ENCODE measurements at regions of chr9 and their contacts with region 1.

Region 1: GRCh38 chr9:135968083-135968476 is 6.9 kb upstream of the UBAC1 start:
- DNase-seq: no peak
- H3K4me3 ChIP-seq: no peak overlapping the region
- H3K27ac ChIP-seq: no peak overlapping the region
- H3K4me1 ChIP-seq: peaks cover 0 to 8% (median 4%) of the 10 kb centered on the region in 4 experiments; a peak in 6 of 7 replicates
- H3K27me3 ChIP-seq: no peaks in the 10 kb centered on the region
- CTCF ChIP-seq: no peak
- EP300 ChIP-seq: no peak
- POLR2A ChIP-seq: no peak
- RAD21 ChIP-seq: no peak

Region 2: GRCh38 chr9:135835131-135835530 is 132.9 kb before region 1 on chr9:
- CTCF ChIA-PET with region 1: no interaction called
- POLR2A ChIA-PET with region 1: no interaction called
- DNase-seq: no peak
- H3K4me3 ChIP-seq: no peak overlapping the region
- H3K27ac ChIP-seq: no peak overlapping the region
- H3K4me1 ChIP-seq: peaks cover 0 to 9% (median 4%) of the 10 kb centered on the region in 4 experiments; a peak in 3 of 7 replicates
- H3K27me3 ChIP-seq: no peaks in the 10 kb centered on the region; a peak in 1 of 7 replicates
- CTCF ChIP-seq: peak in 1 of 3 experiments; percentile 36; a peak in 1 of 4 replicates
- EP300 ChIP-seq: no peak
- POLR2A ChIP-seq: no peak
- RAD21 ChIP-seq: no peak; a peak in 1 of 4 replicates

Region 3: GRCh38 chr9:135983208-135984071 is 15.4 kb after region 1 on chr9:
- CTCF ChIA-PET with region 1: interaction called, 20 read pairs
- POLR2A ChIA-PET with region 1: no interaction called
- DNase-seq: no peak
- H3K4me3 ChIP-seq: no peak overlapping the region
- H3K27ac ChIP-seq: no peak overlapping the region
- H3K4me1 ChIP-seq: peaks cover 0 to 3% (median 0%) of the 10 kb centered on the region in 4 experiments; a peak in 1 of 7 replicates
- H3K27me3 ChIP-seq: no peaks in the 10 kb centered on the region
- CTCF ChIP-seq: no peak
- EP300 ChIP-seq: no peak
- POLR2A ChIP-seq: no peak
- RAD21 ChIP-seq: no peak

Region 4: GRCh38 chr9:135992486-135993408 is 24.7 kb after region 1 on chr9:
- CTCF ChIA-PET with region 1: interaction called, 20 read pairs
- POLR2A ChIA-PET with region 1: interaction called, 3 read pairs
- DNase-seq: peak in 1 of 2 experiments; percentile 81
- H3K4me3 ChIP-seq: peak overlapping the region in 2 of 4 experiments; percentile 32 to 52; a peak in 4 of 8 replicates
- H3K27ac ChIP-seq: no peak overlapping the region
- H3K4me1 ChIP-seq: peaks cover 9 to 34% (median 27%) of the 10 kb centered on the region in 4 experiments
- H3K27me3 ChIP-seq: no peaks in the 10 kb centered on the region
- CTCF ChIP-seq: no peak
- EP300 ChIP-seq: no peak
- POLR2A ChIP-seq: no peak
- RAD21 ChIP-seq: no peak

Region 5: DNA sequence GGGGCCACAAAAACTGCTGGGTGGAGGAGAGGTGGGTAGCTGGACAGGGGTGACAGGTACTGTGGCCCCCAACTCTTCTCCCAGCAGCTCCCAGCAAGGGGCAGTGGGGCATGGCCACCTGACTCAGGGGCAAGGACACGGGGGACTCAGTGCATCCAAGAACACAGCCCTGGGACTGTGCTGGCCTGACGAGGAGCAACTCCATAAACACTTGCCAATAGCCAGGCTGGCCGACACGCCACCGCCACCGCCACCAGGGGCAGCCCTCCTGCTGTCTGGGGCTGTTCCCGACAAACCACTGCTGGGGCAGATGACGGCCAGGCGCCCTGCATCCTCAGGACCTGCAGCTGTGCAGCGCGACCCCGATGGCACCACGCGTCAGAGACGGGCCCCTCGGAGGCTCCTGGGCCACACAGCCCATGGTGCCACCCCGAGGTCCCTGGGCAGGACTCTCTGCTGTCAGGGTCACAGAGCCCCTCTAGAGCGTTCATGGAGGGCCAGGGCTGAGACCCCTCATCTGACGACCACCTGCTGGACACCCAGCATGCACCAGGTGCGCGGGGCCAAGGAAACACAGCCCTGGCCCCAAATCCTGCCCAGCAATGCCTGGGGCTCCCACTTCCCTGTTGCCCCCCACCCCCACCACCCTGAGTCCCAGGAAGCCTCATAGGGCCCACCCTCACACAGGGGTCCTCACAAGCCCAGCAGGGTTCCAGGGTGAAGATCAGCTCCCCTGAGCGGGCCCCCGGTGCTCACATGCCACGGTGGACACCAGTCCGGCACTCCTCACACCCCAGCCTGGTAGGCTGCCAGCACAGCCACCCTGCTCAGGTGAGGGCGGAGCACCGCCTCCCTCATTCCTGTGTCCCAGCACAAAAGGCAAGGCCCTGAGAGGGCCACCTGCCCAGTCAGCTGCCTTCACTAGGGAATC is 49.1 kb after region 1 on chr9:
- CTCF ChIA-PET with region 1: interaction called, 17 read pairs
- POLR2A ChIA-PET with region 1: no interaction called
- DNase-seq: peak in 1 of 2 experiments; percentile 44
- H3K4me3 ChIP-seq: no peak overlapping the region
- H3K27ac ChIP-seq: no peak overlapping the region
- H3K4me1 ChIP-seq: peaks cover 4 to 32% (median 24%) of the 10 kb centered on the region in 4 experiments
- H3K27me3 ChIP-seq: no peaks in the 10 kb centered on the region; a peak in 1 of 7 replicates
- CTCF ChIP-seq: peak in 1 of 3 experiments; percentile 30; a peak in 1 of 4 replicates
- EP300 ChIP-seq: no peak
- POLR2A ChIP-seq: no peak
- RAD21 ChIP-seq: no peak

Region 6: GRCh38 chr9:136093995-136094881 is 126.2 kb after region 1 on chr9:
- CTCF ChIA-PET with region 1: interaction called, 17 read pairs
- POLR2A ChIA-PET with region 1: interaction called, 3 read pairs
- DNase-seq: no peak
- H3K4me3 ChIP-seq: peak overlapping the region; percentile 34 to 69 (median 49)
- H3K27ac ChIP-seq: no peak overlapping the region
- H3K4me1 ChIP-seq: peaks cover 0 to 27% (median 15%) of the 10 kb centered on the region in 4 experiments; a peak in 6 of 7 replicates
- H3K27me3 ChIP-seq: peaks cover 2 to 26% (median 23%) of the 10 kb centered on the region in 4 experiments
- CTCF ChIP-seq: no peak
- EP300 ChIP-seq: no peak
- POLR2A ChIP-seq: no peak
- RAD21 ChIP-seq: no peak

Region 7: GRCh38 chr9:136138566-136138965 is 170.5 kb after region 1 on chr9:
- CTCF ChIA-PET with region 1: interaction called, 11 read pairs
- POLR2A ChIA-PET with region 1: no interaction called
- DNase-seq: peak; percentile 66 to 95
- H3K4me3 ChIP-seq: 0 out of 8 replicates have a peak overlapping the region, but pooled peaks of 1 of the 4 experiments have one; percentile 20
- H3K27ac ChIP-seq: no peak overlapping the region
- H3K4me1 ChIP-seq: peaks cover 3 to 28% (median 18%) of the 10 kb centered on the region in 4 experiments
- H3K27me3 ChIP-seq: peaks cover 4 to 10% (median 10%) of the 10 kb centered on the region in 4 experiments; a peak in 6 of 7 replicates
- CTCF ChIP-seq: peak in 2 of 3 experiments; percentile 78 to 95; a peak in 3 of 4 replicates
- EP300 ChIP-seq: no peak
- POLR2A ChIP-seq: no peak
- RAD21 ChIP-seq: peak; percentile 68 to 77

Measured in H1 (cell line).